ENCODE measurements at regions of chr12 and their contacts with region 1.

Region 1: GRCh38 chr12:12474931-12475795 is 87.5 kb downstream of the DUSP16 start:
- DNase-seq: peak; percentile 66
- H3K4me3 Mint-ChIP-seq: peak overlapping the region; percentile 60
- H3K27ac Mint-ChIP-seq: peak overlapping the region; percentile 99
- H3K4me1 Mint-ChIP-seq: peaks cover 68% of the 10 kb centered on the region
- H3K27me3 Mint-ChIP-seq: no peaks in the 10 kb centered on the region

Region 2: GRCh38 chr12:12384571-12385340 is 90.4 kb before region 1 on chr12:
- intact Hi-C with region 1: loop called (anchors 2 kb)
- DNase-seq: peak; percentile 55
- H3K4me3 Mint-ChIP-seq: peak overlapping the region; percentile 34
- H3K27ac Mint-ChIP-seq: peak overlapping the region; percentile 91
- H3K4me1 Mint-ChIP-seq: peaks cover 51% of the 10 kb centered on the region
- H3K27me3 Mint-ChIP-seq: no peaks in the 10 kb centered on the region

Region 3: GRCh38 chr12:12398026-12398859 is 76.9 kb before region 1 on chr12:
- intact Hi-C with region 1: no loop called
- DNase-seq: no peak
- H3K4me3 Mint-ChIP-seq: no peak overlapping the region
- H3K27ac Mint-ChIP-seq: no peak overlapping the region
- H3K4me1 Mint-ChIP-seq: peaks cover 42% of the 10 kb centered on the region
- H3K27me3 Mint-ChIP-seq: no peaks in the 10 kb centered on the region

Region 4: GRCh38 chr12:12442548-12443071 is 32.6 kb before region 1 on chr12:
- intact Hi-C with region 1: loop called (anchors 1 kb)
- DNase-seq: no peak
- H3K4me3 Mint-ChIP-seq: peak overlapping the region; percentile 34
- H3K27ac Mint-ChIP-seq: peak overlapping the region; percentile 95
- H3K4me1 Mint-ChIP-seq: peaks cover 74% of the 10 kb centered on the region
- H3K27me3 Mint-ChIP-seq: no peaks in the 10 kb centered on the region

Region 5: GRCh38 chr12:12461923-12462315 is 13.2 kb before region 1 on chr12:
- intact Hi-C with region 1: loop called (anchors 1 kb)
- DNase-seq: no peak
- H3K4me3 Mint-ChIP-seq: peak overlapping the region; percentile 75
- H3K27ac Mint-ChIP-seq: peak overlapping the region; percentile 95
- H3K4me1 Mint-ChIP-seq: peaks cover 69% of the 10 kb centered on the region
- H3K27me3 Mint-ChIP-seq: no peaks in the 10 kb centered on the region

Region 6: GRCh38 chr12:12505544-12506495 is 30.7 kb after region 1 on chr12:
- intact Hi-C with region 1: loop called (anchors 1 kb)
- DNase-seq: peak; percentile 17
- H3K4me3 Mint-ChIP-seq: peak overlapping the region; percentile 63
- H3K27ac Mint-ChIP-seq: peak overlapping the region; percentile 93
- H3K4me1 Mint-ChIP-seq: peaks cover 53% of the 10 kb centered on the region
- H3K27me3 Mint-ChIP-seq: no peaks in the 10 kb centered on the region

Region 7: DNA sequence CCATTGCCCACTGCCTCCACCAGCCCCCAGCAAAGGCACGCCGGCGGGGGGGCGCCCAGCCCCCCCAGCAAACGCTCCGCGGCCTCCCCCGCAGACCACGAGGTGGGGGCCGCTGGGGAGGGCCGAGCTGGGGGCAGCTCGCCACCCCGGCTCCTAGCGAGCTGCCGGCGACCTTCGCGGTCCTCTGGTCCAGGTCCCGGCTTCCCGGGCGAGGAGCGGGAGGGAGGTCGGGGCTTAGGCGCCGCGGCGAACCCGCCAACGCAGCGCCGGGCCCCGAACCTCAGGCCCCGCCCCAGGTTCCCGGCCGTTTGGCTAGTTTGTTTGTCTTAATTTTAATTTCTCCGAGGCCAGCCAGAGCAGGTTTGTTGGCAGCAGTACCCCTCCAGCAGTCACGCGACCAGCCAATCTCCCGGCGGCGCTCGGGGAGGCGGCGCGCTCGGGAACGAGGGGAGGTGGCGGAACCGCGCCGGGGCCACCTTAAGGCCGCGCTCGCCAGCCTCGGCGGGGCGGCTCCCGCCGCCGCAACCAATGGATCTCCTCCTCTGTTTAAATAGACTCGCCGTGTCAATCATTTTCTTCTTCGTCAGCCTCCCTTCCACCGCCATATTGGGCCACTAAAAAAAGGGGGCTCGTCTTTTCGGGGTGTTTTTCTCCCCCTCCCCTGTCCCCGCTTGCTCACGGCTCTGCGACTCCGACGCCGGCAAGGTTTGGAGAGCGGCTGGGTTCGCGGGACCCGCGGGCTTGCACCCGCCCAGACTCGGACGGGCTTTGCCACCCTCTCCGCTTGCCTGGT is 241.8 kb after region 1 on chr12 and contains the start of gene CDKN1B:
- intact Hi-C with region 1: loop called (anchors 2 kb)
- DNase-seq: peak; percentile 77
- H3K4me3 Mint-ChIP-seq: peak within 1 kb of the TSS; percentile 98
- H3K27ac Mint-ChIP-seq: peak within 1 kb of the TSS; percentile 99
- H3K4me1 Mint-ChIP-seq: peaks cover 71% of the 10 kb centered on the region
- H3K27me3 Mint-ChIP-seq: no peaks in the 10 kb centered on the region
- total RNA-seq, gene CDKN1B: 54.8 and 61.9 TPM in 2 replicates